Dendritic cell treated with granulocyte-macrophage colony-stimulating factor and Interleukin-4, amounts not matched to agents 40 ng/mL and 50 ng/mL, for 4 days (primary cell): ENCODE measurements at regions of chr7 and their contacts with region 1.

Region 1: DNA sequence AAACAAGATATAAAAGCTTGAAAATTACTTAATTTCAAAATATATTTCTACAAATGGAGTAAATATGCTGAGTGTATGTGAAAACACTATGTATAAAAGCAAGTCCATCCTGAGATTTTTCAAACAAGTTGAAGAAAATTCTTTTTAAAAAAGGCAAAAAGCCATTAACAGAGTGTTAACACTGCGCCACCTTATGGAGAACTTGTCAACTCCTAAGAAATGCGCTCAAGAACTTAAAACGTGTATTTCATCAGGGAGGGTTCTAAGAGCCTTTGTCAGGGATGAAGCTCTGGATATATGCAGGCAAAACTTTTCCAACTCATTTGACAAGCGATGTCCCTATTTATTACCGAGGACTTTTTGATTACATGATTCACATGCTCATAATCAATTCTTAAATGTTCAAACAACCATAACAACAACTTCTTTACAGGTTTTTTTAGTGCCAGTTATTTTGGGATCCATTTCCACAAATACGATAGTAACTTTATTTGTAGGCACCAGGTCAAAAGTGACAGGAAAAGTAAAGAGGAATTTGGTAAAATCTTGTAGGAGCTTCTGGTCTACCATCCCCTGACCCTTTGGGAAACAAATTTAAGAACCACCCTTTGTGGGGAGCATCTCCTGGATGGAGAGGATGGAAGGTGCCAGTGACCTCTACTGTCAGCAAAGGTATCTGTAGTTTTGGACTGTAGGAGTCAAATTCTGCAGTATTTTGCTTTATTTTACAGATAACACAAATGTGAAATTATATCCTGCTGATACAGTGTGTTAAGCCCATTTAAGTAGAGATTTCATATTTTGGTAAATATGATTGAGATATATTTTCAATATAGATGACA is 23.2 kb downstream of the CALCR start:
- H3K4me3 Mint-ChIP-seq: no peak overlapping the region
- H3K27ac Mint-ChIP-seq: no peak overlapping the region
- H3K4me1 Mint-ChIP-seq: no peaks in the 10 kb centered on the region
- H3K27me3 Mint-ChIP-seq: peaks cover 3% of the 10 kb centered on the region

Region 2: GRCh38 chr7:92528188-92528957 is 1022.9 kb before region 1 on chr7 and contains the starts of genes PEX1 and RBM48:
- intact Hi-C with region 1: loop called (anchors 10 kb)
- H3K4me3 Mint-ChIP-seq: peak within 1 kb of the TSS; percentile 88
- H3K27ac Mint-ChIP-seq: peak within 1 kb of the TSS; percentile 88
- H3K4me1 Mint-ChIP-seq: peaks cover 20% of the 10 kb centered on the region
- H3K27me3 Mint-ChIP-seq: no peaks in the 10 kb centered on the region

Region 3: GRCh38 chr7:93133005-93133404 is 418.3 kb before region 1 on chr7:
- intact Hi-C with region 1: no loop called
- H3K4me3 Mint-ChIP-seq: no peak overlapping the region
- H3K27ac Mint-ChIP-seq: no peak overlapping the region
- H3K4me1 Mint-ChIP-seq: no peaks in the 10 kb centered on the region
- H3K27me3 Mint-ChIP-seq: no peaks in the 10 kb centered on the region

Region 4: GRCh38 chr7:93245525-93246432 is 305.5 kb before region 1 on chr7:
- intact Hi-C with region 1: loop called (anchors 5 kb)
- H3K4me3 Mint-ChIP-seq: no peak overlapping the region
- H3K27ac Mint-ChIP-seq: no peak overlapping the region
- H3K4me1 Mint-ChIP-seq: peaks cover 6% of the 10 kb centered on the region
- H3K27me3 Mint-ChIP-seq: no peaks in the 10 kb centered on the region

Region 5: DNA sequence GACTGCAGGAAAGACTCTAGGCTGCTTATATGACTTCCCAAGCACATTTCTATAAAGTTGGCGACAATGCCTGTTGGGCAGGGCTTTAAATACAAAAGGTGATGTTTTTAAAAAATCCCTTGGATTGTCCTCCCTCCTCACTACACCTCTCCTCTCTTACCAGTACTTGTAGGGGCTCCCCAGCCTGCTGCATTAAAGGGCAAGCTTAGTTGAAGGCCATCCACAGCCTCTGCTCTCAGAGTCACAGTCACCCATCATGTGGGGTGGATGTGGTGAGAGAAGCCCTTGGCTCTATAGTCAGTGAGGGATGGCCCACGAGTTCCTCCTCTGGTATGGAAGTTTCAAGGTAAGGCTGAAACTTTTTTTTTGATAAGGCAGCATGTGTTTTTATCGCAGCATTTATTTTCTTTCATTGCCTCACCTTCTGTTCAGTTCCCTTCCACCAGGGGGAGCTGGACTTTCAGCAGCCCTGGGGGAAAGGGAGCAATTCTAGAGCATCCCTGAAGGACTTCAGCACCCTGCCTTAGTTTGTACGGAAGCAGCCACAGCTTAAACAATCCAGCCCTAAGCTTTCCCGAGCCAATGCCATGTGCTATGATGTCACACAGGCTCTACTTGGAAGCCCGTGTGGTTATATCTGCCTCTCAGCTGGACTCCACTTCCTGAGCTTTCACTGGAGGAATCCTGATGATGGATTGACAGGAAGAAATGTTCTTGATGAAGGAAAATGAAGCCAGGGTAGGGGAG is 108.6 kb before region 1 on chr7:
- intact Hi-C with region 1: loop called (anchors 2 kb)
- H3K4me3 Mint-ChIP-seq: no peak overlapping the region
- H3K27ac Mint-ChIP-seq: no peak overlapping the region
- H3K4me1 Mint-ChIP-seq: no peaks in the 10 kb centered on the region
- H3K27me3 Mint-ChIP-seq: no peaks in the 10 kb centered on the region

Region 6: DNA sequence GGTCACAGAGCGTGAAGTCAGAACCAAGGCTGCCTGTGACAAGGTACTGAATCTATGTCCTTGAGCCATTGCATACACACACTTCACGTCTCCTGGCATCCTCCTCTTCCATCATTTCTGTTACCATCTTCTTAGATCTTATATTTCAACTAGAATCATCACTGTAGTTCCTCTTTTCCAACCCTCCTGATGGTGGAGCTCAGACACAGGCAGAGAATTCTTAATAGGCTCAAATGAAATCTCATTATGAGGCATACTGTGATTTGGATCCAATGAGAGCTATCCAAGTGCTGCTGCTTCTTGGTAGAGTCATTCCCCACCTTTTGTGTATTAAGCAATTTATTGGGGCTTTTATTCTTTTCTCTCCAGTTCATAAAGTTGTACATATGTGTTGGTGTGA is 89.9 kb before region 1 on chr7:
- intact Hi-C with region 1: loop called (anchors 1 kb)
- H3K4me3 Mint-ChIP-seq: no peak overlapping the region
- H3K27ac Mint-ChIP-seq: no peak overlapping the region
- H3K4me1 Mint-ChIP-seq: no peaks in the 10 kb centered on the region
- H3K27me3 Mint-ChIP-seq: no peaks in the 10 kb centered on the region